ENCODE measurements at regions of chr1 and their contacts with region 1.

Region 1: GRCh38 chr1:212477014-212477679 is 44.4 kb downstream of the NENF start:
- DNase-seq: peak; percentile 85
- ATAC-seq: peak; percentile 94
- H3K4me3 ChIP-seq: no peak overlapping the region
- H3K4me3 Mint-ChIP-seq: no peak overlapping the region
- H3K27ac ChIP-seq: no peak overlapping the region
- H3K27ac Mint-ChIP-seq: no peak overlapping the region
- H3K4me1 ChIP-seq: peaks cover 4 to 7% of the 10 kb centered on the region in 2 donors
- H3K4me1 Mint-ChIP-seq: peaks cover 6% of the 10 kb centered on the region
- H3K27me3 ChIP-seq: no peaks in the 10 kb centered on the region
- H3K27me3 Mint-ChIP-seq: peaks cover 22% of the 10 kb centered on the region
- CTCF ChIP-seq: peak; percentile 87

Region 2: GRCh38 chr1:211698161-211699026 is 778.8 kb before region 1 on chr1:
- CTCF ChIA-PET with region 1: interaction called, 3 read pairs
- POLR2A ChIA-PET with region 1: interaction called, 12 read pairs
- intact Hi-C with region 1: no loop called
- DNase-seq: peak; percentile 76
- ATAC-seq: peak; percentile 45
- H3K4me3 ChIP-seq: peak overlapping the region in 3 of 5 experiments; percentile 21 to 44 (median 34)
- H3K4me3 Mint-ChIP-seq: peak overlapping the region; percentile 76
- H3K27ac ChIP-seq: peak overlapping the region in 1 of 2 donors; percentile 11
- H3K27ac Mint-ChIP-seq: peak overlapping the region; percentile 59
- H3K4me1 ChIP-seq: peaks cover 44 to 52% of the 10 kb centered on the region in 2 donors
- H3K4me1 Mint-ChIP-seq: peaks cover 53% of the 10 kb centered on the region
- H3K27me3 ChIP-seq: peaks cover 0 to 5% (median 0%) of the 10 kb centered on the region in 4 experiments
- H3K27me3 Mint-ChIP-seq: peaks cover 5% of the 10 kb centered on the region
- CTCF ChIP-seq: peak; percentile 97

Region 3: DNA sequence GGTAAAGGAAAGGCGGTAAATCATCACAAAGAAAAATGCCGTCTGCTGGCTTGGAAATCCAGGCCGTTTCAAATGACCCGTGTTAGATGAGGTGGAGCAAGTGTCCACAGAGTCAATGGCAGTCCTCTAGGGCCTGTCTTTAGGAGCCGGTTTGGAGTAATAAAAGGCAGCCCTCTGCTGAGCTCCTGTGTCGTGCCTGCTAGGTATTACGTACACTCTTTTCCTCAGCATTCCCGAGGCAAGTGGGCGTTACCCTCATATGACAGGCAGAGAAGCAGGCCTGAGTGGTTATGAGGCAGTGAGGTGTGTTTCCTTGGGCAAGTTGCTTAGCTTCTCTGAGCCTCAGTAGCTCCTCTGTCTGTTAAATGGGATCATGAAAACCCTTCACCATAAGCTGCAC is 36.7 kb before region 1 on chr1:
- CTCF ChIA-PET with region 1: no interaction called
- POLR2A ChIA-PET with region 1: no interaction called
- intact Hi-C with region 1: no loop called
- DNase-seq: no peak
- ATAC-seq: no peak
- H3K4me3 ChIP-seq: no peak overlapping the region
- H3K4me3 Mint-ChIP-seq: no peak overlapping the region
- H3K27ac ChIP-seq: no peak overlapping the region
- H3K27ac Mint-ChIP-seq: no peak overlapping the region
- H3K4me1 ChIP-seq: no peaks in the 10 kb centered on the region
- H3K4me1 Mint-ChIP-seq: peaks cover 8% of the 10 kb centered on the region
- H3K27me3 ChIP-seq: no peaks in the 10 kb centered on the region
- H3K27me3 Mint-ChIP-seq: no peaks in the 10 kb centered on the region
- CTCF ChIP-seq: no peak

Region 4: DNA sequence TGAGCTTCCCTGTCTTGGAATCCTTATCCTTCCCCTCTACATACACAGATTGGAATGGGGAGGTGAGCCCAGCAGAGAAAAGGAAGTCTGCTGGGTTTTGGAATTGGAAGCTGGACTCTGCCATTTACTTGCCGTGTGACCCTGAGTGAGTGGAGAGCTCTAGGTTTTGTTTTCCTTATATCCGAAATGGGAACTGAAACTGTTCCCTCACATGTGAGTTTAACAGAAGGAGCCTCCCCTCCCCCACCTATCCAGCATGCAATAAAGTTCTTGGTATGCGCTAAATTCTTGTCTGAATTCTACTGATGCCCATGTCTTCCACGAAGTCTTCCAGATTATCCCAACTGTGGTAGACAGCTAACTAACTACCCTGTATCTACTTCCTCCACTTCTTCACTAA is 14.3 kb after region 1 on chr1:
- CTCF ChIA-PET with region 1: interaction called, 10 read pairs
- POLR2A ChIA-PET with region 1: no interaction called
- intact Hi-C with region 1: no loop called
- DNase-seq: no peak
- ATAC-seq: no peak
- H3K4me3 ChIP-seq: no peak overlapping the region
- H3K4me3 Mint-ChIP-seq: no peak overlapping the region
- H3K27ac ChIP-seq: no peak overlapping the region
- H3K27ac Mint-ChIP-seq: no peak overlapping the region
- H3K4me1 ChIP-seq: no peaks in the 10 kb centered on the region
- H3K4me1 Mint-ChIP-seq: no peaks in the 10 kb centered on the region
- H3K27me3 ChIP-seq: peaks cover 0 to 4% (median 0%) of the 10 kb centered on the region in 4 experiments
- H3K27me3 Mint-ChIP-seq: peaks cover 14% of the 10 kb centered on the region
- CTCF ChIP-seq: no peak

Region 5: DNA sequence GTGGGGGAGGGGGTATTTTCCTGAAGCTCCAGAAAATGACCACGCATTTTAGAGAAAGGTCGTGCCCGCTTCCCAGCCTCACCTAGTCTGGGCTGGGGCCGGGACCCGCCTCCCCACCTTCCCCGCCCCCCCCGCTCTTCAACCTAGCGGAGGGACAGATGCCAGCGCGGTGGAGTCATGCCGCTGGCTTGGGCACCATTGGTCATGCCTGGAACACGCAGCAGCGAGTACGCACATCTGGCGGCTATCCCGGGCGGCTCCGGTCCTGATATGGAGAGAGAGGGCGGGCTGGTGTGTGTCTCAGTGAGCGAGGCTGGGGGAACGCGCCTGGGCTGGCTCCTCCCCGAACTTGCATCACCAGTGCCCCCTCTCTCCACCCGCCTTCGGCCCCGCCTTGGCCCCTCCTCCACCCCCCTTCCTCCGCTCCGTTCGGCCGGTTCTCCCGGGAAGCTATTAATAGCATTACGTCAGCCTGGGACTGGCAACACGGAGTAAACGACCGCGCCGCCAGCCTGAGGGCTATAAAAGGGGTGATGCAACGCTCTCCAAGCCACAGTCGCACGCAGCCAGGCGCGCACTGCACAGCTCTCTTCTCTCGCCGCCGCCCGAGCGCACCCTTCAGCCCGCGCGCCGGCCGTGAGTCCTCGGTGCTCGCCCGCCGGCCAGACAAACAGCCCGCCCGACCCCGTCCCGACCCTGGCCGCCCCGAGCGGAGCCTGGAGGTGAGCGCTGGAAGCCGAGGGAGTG is 131.2 kb after region 1 on chr1 and contains the start of gene ATF3:
- CTCF ChIA-PET with region 1: interaction called, 15 read pairs
- POLR2A ChIA-PET with region 1: no interaction called
- intact Hi-C with region 1: no loop called
- DNase-seq: peak; percentile 91
- ATAC-seq: peak; percentile 80
- H3K4me3 ChIP-seq: peak within 1 kb of the TSS; percentile 53 to 76 (median 72)
- H3K4me3 Mint-ChIP-seq: peak within 1 kb of the TSS; percentile 97
- H3K27ac ChIP-seq: peak within 1 kb of the TSS in 1 of 2 donors; percentile 54
- H3K27ac Mint-ChIP-seq: peak within 1 kb of the TSS; percentile 87
- H3K4me1 ChIP-seq: peaks cover 28 to 32% of the 10 kb centered on the region in 2 donors
- H3K4me1 Mint-ChIP-seq: peaks cover 28% of the 10 kb centered on the region
- H3K27me3 ChIP-seq: peaks cover 0 to 63% (median 36%) of the 10 kb centered on the region in 4 experiments
- H3K27me3 Mint-ChIP-seq: peaks cover 52% of the 10 kb centered on the region
- CTCF ChIP-seq: no peak
- total RNA-seq, gene ATF3: 2.7 and 4.5 TPM in 2 replicates

Region 6: DNA sequence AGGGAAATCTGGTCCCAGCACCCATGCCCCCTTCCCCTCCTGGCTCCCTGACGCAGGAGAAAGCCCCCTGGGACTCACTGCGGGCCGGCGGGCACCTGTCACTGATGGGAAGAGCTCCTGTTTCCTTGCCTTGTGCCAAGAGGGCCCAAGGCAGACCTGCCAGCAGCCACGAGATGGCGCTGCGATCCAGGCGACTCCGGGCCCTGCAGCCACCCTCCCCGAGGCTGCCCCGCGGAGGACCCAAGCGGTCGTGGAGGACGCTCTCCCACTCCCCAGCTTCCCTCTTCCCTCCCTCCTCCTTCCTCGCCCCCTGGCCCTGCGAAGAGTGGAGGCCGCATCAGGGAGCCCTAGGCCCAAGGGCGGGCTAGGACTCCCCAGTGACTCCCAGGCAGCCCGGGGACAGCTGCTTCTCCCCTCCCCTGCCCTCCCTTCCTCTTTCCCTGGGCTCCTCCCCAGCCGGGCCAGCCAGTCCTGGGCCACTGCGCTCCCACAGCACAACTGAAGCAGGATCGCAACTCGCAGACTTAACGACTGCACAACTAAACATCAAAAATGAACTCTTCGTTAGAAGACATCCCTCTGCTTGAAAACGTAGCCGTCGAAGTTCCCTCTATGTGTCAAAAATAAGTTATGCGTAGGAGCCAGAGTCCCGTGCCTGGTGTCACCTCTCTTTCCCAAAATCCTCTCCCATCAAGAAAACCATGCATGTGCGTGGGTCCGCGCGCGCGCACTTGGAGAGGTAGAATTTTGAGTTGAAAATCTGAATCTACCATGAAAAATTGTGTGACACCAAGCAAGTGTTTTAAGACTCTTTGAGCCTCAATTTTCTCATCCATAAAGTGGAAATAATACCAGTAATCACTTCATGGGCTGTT is 188.3 kb after region 1 on chr1:
- CTCF ChIA-PET with region 1: interaction called, 38 read pairs
- POLR2A ChIA-PET with region 1: no interaction called
- intact Hi-C with region 1: loop called (anchors 1 kb)
- DNase-seq: peak; percentile 85
- ATAC-seq: peak; percentile 93
- H3K4me3 ChIP-seq: peak overlapping the region in 4 of 5 experiments; percentile 24 to 58 (median 48)
- H3K4me3 Mint-ChIP-seq: peak overlapping the region; percentile 79
- H3K27ac ChIP-seq: no peak overlapping the region
- H3K27ac Mint-ChIP-seq: no peak overlapping the region
- H3K4me1 ChIP-seq: peaks cover 6 to 22% of the 10 kb centered on the region in 2 donors
- H3K4me1 Mint-ChIP-seq: peaks cover 16% of the 10 kb centered on the region
- H3K27me3 ChIP-seq: peaks cover 0 to 6% (median 0%) of the 10 kb centered on the region in 4 experiments
- H3K27me3 Mint-ChIP-seq: no peaks in the 10 kb centered on the region
- CTCF ChIP-seq: peak; percentile 93

Region 7: GRCh38 chr1:212782422-212783154 is 305.4 kb after region 1 on chr1:
- CTCF ChIA-PET with region 1: interaction called, 40 read pairs
- POLR2A ChIA-PET with region 1: no interaction called
- intact Hi-C with region 1: loop called (anchors 1 kb)
- DNase-seq: peak; percentile 54
- ATAC-seq: peak; percentile 51
- H3K4me3 ChIP-seq: no peak overlapping the region
- H3K4me3 Mint-ChIP-seq: no peak overlapping the region
- H3K27ac ChIP-seq: no peak overlapping the region
- H3K27ac Mint-ChIP-seq: no peak overlapping the region
- H3K4me1 ChIP-seq: no peaks in the 10 kb centered on the region
- H3K4me1 Mint-ChIP-seq: no peaks in the 10 kb centered on the region
- H3K27me3 ChIP-seq: no peaks in the 10 kb centered on the region
- H3K27me3 Mint-ChIP-seq: no peaks in the 10 kb centered on the region
- CTCF ChIP-seq: peak; percentile 87

Measured in B cell (primary cell).